ENCODE measurements at regions of chr15 and their contacts with region 1.

Region 1: DNA sequence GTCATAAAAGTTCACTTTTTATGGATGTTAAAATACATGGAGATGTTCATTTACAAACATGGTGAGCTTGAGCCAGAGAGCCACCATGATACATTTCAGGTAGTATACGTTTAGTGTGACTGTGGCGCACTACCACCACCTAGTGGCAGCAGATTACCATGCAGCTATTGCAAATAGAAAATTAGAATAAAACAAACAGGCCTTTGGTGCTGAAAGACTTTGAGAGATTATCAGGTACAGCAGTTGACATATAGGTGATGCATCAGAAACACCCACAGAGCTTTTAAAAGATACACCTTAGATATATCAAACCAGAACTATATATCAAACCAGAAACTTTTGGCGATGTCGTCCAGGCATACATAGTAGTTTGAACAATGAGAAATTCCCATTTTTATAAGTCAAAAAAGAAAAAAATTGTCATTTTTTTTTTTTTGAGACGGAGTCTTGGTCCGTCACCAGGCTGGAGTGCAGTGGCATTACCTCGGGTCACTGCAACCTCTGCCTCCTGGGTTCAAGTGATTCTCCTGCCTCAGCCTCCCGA is 42.0 kb upstream of the ICE2 start:
- DNase-seq: peak; percentile 62 to 83 (median 70)
- H3K4me3 ChIP-seq: no peak overlapping the region
- H3K4me3 Mint-ChIP-seq: peak overlapping the region in 2 of 7 donors; percentile 23 to 53
- H3K27ac ChIP-seq: no peak overlapping the region
- H3K27ac Mint-ChIP-seq: peak overlapping the region; percentile 60 to 96 (median 78)
- H3K4me1 ChIP-seq: peaks cover 14% of the 10 kb centered on the region
- H3K4me1 Mint-ChIP-seq: peaks cover 60 to 84% (median 73%) of the 10 kb centered on the region in 3 donors
- H3K27me3 ChIP-seq: no peaks in the 10 kb centered on the region
- H3K27me3 Mint-ChIP-seq: no peaks in the 10 kb centered on the region

Region 2: DNA sequence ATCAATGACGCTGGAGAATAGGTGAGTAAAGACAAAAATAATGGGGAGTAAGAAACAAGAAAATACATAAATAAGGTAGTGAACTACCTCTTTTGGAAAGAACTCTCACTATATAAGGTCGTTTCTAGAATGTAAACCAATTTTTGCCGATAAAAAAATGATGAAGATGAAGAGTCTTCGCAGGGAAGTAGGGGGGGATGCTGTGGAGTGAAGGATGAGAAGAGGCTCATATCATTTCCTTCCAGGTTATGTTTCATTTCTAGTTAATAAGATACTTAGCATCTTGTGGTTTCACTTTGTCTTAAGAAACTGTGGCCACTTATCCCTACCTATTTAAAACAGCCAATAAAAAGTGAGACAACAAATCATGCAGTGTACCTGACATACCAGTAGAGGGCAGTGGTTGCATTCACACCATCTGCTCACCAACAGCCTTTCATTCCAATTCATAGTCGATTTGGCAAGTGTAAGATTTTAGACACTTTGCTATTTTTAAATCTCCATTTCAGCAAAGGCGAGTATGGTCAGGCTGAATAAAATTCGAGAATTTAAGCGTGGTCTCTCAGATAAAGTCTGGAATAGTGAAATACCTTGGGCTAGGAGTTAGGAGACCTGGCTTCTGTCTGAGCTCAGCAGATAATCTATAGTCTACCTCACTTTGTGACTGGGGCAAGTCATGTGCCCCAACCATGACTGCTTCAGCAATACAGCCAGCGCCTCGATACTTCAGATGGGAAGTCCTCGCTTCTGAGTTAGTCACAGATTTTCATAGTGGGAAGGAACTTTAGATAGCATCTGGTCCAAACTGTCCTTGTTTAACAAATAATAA is 13.1 kb before region 1 on chr15:
- CTCF ChIA-PET with region 1: interaction called, 19 read pairs
- POLR2A ChIA-PET with region 1: interaction called, 6 read pairs
- DNase-seq: peak; percentile 12 to 70 (median 69)
- H3K4me3 ChIP-seq: no peak overlapping the region
- H3K4me3 Mint-ChIP-seq: peak overlapping the region in 6 of 7 donors; percentile 2 to 55 (median 23)
- H3K27ac ChIP-seq: no peak overlapping the region
- H3K27ac Mint-ChIP-seq: peak overlapping the region; percentile 61 to 93 (median 88)
- H3K4me1 ChIP-seq: peaks cover 23% of the 10 kb centered on the region
- H3K4me1 Mint-ChIP-seq: peaks cover 46 to 62% (median 56%) of the 10 kb centered on the region in 3 donors
- H3K27me3 ChIP-seq: no peaks in the 10 kb centered on the region
- H3K27me3 Mint-ChIP-seq: peaks cover 0 to 3% of the 10 kb centered on the region in 2 donors

Region 3: DNA sequence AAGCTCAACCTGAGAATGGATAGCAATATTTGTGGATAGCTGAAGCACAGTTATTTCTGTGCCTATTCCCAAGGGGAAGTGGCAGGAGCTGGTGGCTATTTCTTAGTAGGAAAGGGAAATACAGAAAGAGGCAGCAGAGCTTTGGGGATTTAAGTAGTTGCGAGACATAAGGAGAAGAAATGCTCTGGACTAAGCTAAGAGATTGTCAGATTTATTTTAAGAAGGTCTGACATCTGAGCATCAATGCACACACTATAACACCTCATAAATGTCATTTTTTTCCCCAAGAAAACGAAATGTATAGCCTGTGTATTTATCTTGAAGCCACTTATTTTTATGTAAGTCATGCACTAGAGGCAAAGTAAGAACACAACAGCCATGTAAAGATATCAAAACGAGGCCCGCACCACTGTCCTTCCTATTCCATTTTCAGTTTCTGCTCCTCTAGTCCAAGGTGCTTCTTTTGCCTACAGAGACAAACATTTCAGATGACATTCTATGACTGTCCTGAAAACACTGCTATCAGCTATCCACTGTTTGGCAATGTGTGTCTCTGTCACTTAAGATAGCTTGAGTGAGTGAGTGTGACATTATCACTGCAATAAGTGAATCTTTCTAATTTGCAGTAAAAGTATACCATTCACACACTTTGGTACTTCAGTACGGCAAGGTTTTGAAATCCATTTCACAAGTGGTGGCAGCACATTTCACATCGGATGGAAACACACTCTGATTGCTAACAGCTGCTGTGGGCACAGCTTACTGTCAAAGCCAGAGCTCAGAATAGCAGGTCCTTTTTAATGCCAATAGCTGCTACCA is 20.8 kb after region 1 on chr15:
- CTCF ChIA-PET with region 1: interaction called, 18 read pairs
- POLR2A ChIA-PET with region 1: interaction called, 4 read pairs
- DNase-seq: no peak
- H3K4me3 ChIP-seq: no peak overlapping the region
- H3K4me3 Mint-ChIP-seq: peak overlapping the region; percentile 34 to 88 (median 69)
- H3K27ac ChIP-seq: no peak overlapping the region
- H3K27ac Mint-ChIP-seq: peak overlapping the region; percentile 66 to 99 (median 93)
- H3K4me1 ChIP-seq: peaks cover 94% of the 10 kb centered on the region
- H3K4me1 Mint-ChIP-seq: peaks cover 97 to 100% (median 100%) of the 10 kb centered on the region in 3 donors
- H3K27me3 ChIP-seq: no peaks in the 10 kb centered on the region
- H3K27me3 Mint-ChIP-seq: no peaks in the 10 kb centered on the region

Region 4: DNA sequence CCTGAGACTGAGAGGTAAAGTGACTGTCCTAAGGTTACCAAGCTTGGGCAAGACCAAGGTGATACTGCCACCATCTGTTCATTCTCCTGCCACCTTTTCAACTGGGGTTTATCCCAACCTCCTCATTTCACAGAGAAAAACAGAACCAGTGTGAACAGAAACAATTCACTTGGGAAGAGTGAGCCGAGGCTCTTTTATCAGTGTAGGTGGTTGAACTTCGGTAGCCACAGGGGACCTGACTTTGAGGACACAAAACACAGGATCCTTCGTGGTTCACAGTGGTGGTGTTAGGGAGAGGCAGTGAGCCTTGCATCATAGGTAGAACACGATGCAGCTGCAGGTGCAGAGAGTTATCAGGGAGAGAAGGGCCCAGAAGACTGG is 30.9 kb after region 1 on chr15:
- CTCF ChIA-PET with region 1: interaction called, 11 read pairs
- POLR2A ChIA-PET with region 1: no interaction called
- DNase-seq: no peak
- H3K4me3 ChIP-seq: peak overlapping the region; percentile 14
- H3K4me3 Mint-ChIP-seq: peak overlapping the region; percentile 57 to 93 (median 83)
- H3K27ac ChIP-seq: no peak overlapping the region
- H3K27ac Mint-ChIP-seq: peak overlapping the region; percentile 84 to 99 (median 96)
- H3K4me1 ChIP-seq: peaks cover 87% of the 10 kb centered on the region
- H3K4me1 Mint-ChIP-seq: peaks cover 93 to 98% (median 98%) of the 10 kb centered on the region in 3 donors
- H3K27me3 ChIP-seq: no peaks in the 10 kb centered on the region
- H3K27me3 Mint-ChIP-seq: no peaks in the 10 kb centered on the region

Region 5: GRCh38 chr15:60592371-60593169 is 71.7 kb after region 1 on chr15:
- CTCF ChIA-PET with region 1: interaction called, 19 read pairs
- POLR2A ChIA-PET with region 1: no interaction called
- DNase-seq: peak; percentile 80 to 92 (median 88)
- H3K4me3 ChIP-seq: peak overlapping the region; percentile 74
- H3K4me3 Mint-ChIP-seq: peak overlapping the region; percentile 84 to 94 (median 85)
- H3K27ac ChIP-seq: peak overlapping the region; percentile 80
- H3K27ac Mint-ChIP-seq: peak overlapping the region; percentile 81 to 98 (median 89)
- H3K4me1 ChIP-seq: peaks cover 31% of the 10 kb centered on the region
- H3K4me1 Mint-ChIP-seq: peaks cover 37 to 54% (median 45%) of the 10 kb centered on the region in 3 donors
- H3K27me3 ChIP-seq: no peaks in the 10 kb centered on the region
- H3K27me3 Mint-ChIP-seq: peaks cover 0 to 2% of the 10 kb centered on the region in 2 donors

Measured in CD8-positive, alpha-beta memory T cell (primary cell).